MCF 10A (cell line): ENCODE measurements at regions of chr2 and their contacts with region 1.

Region 1: DNA sequence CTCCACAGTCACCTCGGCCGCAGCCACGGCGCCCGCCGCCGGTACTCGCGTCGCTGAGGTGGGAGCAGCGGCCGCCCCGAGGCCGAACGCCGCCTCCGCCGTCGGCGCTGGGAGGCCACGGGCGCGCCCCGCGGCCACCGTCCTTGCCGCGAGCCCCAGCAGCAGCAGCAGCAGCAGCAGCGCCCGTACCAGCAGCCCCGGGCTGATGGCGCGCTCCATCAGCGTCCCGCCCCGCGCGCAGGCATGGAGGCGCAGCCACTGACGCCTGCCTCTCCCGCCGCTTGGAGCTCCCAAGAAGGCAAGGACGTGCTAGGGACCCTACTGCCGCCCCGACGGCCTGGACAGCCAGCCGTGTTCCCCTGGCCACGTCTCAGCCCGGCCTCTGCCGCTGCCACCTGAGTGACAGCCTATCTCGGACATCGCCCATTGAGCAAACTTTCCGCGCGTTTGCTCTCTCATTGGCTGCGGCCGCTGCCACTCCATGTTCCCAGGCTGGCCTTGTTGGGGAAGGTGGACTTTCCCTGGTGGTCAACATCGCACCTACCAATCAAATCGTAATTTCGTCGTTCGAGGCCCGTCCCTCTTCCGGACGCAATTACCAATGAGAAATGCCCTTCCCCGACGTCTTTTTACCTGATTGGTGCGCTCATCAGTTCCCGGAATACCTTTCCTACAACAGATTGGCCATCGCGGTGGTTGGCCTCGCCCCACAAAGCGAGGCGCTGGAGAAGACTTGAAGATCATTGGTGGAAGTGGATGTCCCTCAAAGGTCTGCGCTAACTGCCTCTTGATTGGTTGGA is at the start of gene EIF2AK3:
- DNase-seq: peak; percentile 100
- H3K4me3 Mint-ChIP-seq: no peak within 1 kb of the TSS
- H3K27ac Mint-ChIP-seq: no peak within 1 kb of the TSS
- H3K4me1 Mint-ChIP-seq: no peaks in the 10 kb centered on the region
- H3K27me3 Mint-ChIP-seq: no peaks in the 10 kb centered on the region
- CTCF ChIP-seq: no peak
- total RNA-seq, gene EIF2AK3: 21.6 and 21.8 TPM in 2 replicates

Region 2: GRCh38 chr2:88590998-88591613 is 36.1 kb before region 1 on chr2:
- CTCF ChIA-PET with region 1: interaction called, 4 read pairs
- POLR2A ChIA-PET with region 1: interaction called, 6 read pairs
- intact Hi-C with region 1: loop called (anchors 1 kb)
- DNase-seq: peak; percentile 73
- H3K4me3 Mint-ChIP-seq: no peak overlapping the region
- H3K27ac Mint-ChIP-seq: no peak overlapping the region
- H3K4me1 Mint-ChIP-seq: no peaks in the 10 kb centered on the region
- H3K27me3 Mint-ChIP-seq: no peaks in the 10 kb centered on the region
- CTCF ChIP-seq: peak; percentile 58

Region 3: GRCh38 chr2:88600038-88600465 is 27.2 kb before region 1 on chr2:
- CTCF ChIA-PET with region 1: no interaction called
- POLR2A ChIA-PET with region 1: interaction called, 49 read pairs
- intact Hi-C with region 1: loop called (anchors 1 kb)
- DNase-seq: peak; percentile 93
- H3K4me3 Mint-ChIP-seq: no peak overlapping the region
- H3K27ac Mint-ChIP-seq: no peak overlapping the region
- H3K4me1 Mint-ChIP-seq: peaks cover 15% of the 10 kb centered on the region
- H3K27me3 Mint-ChIP-seq: no peaks in the 10 kb centered on the region
- CTCF ChIP-seq: no peak

Region 4: GRCh38 chr2:88606371-88607030 is 20.8 kb before region 1 on chr2:
- CTCF ChIA-PET with region 1: interaction called, 5 read pairs
- POLR2A ChIA-PET with region 1: interaction called, 119 read pairs
- intact Hi-C with region 1: no loop called
- DNase-seq: no peak
- H3K4me3 Mint-ChIP-seq: no peak overlapping the region
- H3K27ac Mint-ChIP-seq: no peak overlapping the region
- H3K4me1 Mint-ChIP-seq: peaks cover 4% of the 10 kb centered on the region
- H3K27me3 Mint-ChIP-seq: no peaks in the 10 kb centered on the region
- CTCF ChIP-seq: no peak

Region 5: DNA sequence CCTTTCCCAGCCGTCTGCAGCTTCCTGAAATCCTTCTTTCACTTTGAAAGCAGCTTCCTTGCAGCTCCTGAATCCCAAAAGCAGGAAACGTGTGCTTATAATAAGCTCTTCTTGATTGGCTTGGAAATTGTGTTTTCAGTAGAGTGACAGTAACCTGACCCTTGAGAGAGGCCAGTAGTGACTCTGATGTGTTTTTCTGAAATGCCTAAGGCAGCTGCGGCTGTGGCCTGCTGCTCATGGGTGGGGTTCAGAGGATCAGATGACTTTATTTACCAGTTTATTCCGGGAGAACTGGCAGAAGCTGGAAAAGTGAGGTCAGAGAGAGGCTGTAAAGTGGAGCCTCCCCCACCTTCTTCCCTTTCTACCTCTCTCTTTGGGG is 32.3 kb after region 1 on chr2:
- CTCF ChIA-PET with region 1: interaction called, 5 read pairs
- POLR2A ChIA-PET with region 1: interaction called, 53 read pairs
- intact Hi-C with region 1: no loop called
- DNase-seq: peak; percentile 71
- H3K4me3 Mint-ChIP-seq: peak overlapping the region; percentile 21
- H3K27ac Mint-ChIP-seq: peak overlapping the region; percentile 86
- H3K4me1 Mint-ChIP-seq: peaks cover 21% of the 10 kb centered on the region
- H3K27me3 Mint-ChIP-seq: no peaks in the 10 kb centered on the region
- CTCF ChIP-seq: no peak

Region 6: DNA sequence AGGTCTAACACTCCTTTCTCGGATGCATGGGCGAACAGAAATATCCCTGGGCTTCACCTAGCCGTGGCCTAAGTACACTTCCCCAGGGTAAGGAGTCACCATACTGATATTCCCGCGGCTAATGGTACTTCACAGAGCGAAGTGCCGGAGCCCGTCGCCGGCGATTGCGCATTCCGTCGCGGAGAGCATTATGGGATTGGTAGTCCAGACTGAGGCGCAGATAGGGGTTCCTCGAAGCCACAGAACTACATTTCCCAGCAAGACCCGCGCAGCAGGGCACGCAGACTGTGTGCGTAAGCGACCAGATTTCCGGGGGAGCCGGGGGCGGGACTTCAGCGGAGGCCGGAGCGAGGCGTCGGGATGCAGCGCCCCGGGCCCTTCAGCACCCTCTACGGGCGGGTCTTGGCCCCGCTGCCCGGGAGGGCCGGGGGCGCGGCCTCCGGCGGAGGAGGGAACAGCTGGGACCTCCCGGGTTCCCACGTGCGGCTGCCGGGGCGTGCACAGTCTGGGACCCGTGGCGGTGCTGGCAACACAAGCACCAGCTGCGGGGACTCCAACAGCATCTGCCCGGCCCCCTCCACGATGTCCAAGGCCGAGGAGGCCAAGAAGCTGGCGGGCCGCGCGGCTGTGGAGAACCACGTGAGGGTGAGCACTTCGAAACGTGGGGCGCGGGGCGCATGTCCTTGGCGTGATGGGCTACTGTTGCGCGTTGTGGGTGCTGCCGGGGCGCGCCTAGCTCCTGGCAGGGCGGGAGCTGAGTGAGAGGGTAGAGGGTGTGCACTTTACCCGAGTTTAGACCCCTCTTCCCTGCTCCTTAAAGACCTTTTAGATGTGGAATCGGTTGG is 64.3 kb after region 1 on chr2 and contains the start of gene RPIA:
- CTCF ChIA-PET with region 1: interaction called, 3 read pairs
- POLR2A ChIA-PET with region 1: interaction called, 25 read pairs
- intact Hi-C with region 1: loop called (anchors 1 kb)
- DNase-seq: peak; percentile 98
- H3K4me3 Mint-ChIP-seq: peak within 1 kb of the TSS; percentile 84
- H3K27ac Mint-ChIP-seq: peak within 1 kb of the TSS; percentile 36
- H3K4me1 Mint-ChIP-seq: peaks cover 27% of the 10 kb centered on the region
- H3K27me3 Mint-ChIP-seq: no peaks in the 10 kb centered on the region
- CTCF ChIP-seq: peak; percentile 30
- total RNA-seq, gene RPIA: 12.2 and 14.1 TPM in 2 replicates